Left colon (tissue), 2 donors: ENCODE measurements at regions of chr16 and their contacts with region 1.

Region 1: DNA sequence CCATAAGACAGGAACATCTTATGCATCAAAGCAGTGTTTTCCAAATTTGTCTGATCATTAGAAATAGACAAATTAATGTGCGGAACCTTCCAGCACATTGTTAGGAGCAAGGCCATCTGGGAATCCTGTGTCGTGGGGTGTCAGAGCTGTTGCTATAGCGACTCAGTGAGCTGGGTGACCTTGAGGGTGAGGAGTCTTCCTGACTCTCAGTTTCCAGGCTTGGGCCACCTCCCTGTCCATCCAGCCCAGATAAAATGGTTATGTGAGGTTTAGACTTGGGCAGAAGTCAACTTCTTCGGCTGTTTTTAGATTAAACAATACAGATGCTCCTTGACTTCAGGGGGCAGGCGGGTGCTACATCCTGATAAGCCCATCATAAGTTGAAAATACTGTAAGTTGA is 20.6 kb downstream of the MT1X start:
- DNase-seq: no peak
- ATAC-seq: no peak

Region 2: GRCh38 chr16:56460101-56460500 is 242.7 kb before region 1 on chr16:
- intact Hi-C with region 1: no loop called
- DNase-seq: no peak
- ATAC-seq: no peak

Region 3: DNA sequence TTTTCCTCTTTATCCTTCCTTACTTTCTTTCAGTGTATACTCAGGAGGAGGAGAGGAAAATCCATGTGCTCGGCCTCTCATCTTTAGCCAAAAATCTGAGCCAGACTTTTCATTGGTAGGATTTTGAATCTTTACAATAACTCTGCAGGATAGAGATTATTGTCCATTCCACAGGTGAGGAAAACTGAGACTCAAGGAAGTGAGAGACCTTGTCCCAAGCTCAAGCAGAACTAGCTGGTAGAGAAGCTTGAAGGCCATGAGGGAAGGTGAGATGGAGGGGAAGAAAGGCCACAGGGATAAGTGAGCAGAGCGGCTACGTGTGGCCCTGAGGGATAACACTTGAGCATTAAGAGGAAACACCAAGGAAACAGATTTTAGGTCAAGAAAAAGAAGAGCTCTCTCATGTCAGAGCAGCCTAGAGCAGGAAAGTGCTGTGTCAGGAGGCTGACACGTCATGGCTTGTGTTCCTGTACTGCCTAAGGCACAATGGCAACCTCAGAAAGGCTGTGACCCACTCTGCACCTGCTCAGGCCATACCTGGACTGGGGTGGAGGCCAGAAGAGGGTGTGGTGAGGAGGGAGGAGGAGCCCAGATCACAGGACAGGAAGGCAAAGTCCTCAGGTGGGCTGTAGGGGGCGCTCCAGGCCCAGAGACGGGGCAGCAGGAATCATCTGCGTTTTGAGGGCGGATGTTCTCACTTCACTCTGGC is 126.1 kb before region 1 on chr16:
- intact Hi-C with region 1: loop called in 1 of 2 experiments (anchors 2 kb)
- DNase-seq: peak; percentile 84
- ATAC-seq: peak; percentile 100